PC-3 (cell line): ENCODE measurements at regions of chr15 and their contacts with region 1.

Region 1: GRCh38 chr15:33278816-33279612 is 31.8 kb upstream of the RYR3 start:
- DNase-seq: peak; percentile 96
- ATAC-seq: peak; percentile 94
- H3K4me3 ChIP-seq: peak overlapping the region; percentile 23; the same call in 1 of the 2 replicates
- H3K27ac ChIP-seq: peak overlapping the region; percentile 97
- H3K4me1 ChIP-seq: peaks cover 19% of the 10 kb centered on the region
- H3K27me3 ChIP-seq: no peaks in the 10 kb centered on the region
- CTCF ChIP-seq: 0 out of 2 replicates have a peak, but pooled peaks have one; percentile 26

Region 2: DNA sequence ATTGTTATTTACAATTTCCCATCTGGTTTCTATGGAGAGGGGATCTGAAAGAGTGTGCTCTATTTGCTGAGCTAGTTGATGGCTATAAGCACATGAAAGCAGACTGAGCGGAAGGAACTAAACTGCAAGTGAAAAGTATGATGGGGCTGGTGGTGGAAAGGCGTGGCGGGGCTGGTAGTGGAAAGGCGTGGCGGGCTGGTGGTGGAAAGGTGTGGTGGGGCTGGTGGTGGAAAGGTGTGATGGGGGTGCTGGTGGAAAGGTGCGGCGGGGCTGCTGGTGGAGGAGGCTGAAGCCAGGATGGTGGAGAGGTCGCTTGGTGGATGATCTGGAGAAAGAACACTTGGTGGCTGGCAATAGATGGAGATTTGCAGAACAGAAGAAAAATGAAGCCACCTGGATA is 221.2 kb before region 1 on chr15:
- CTCF ChIA-PET with region 1: no interaction called
- POLR2A ChIA-PET with region 1: interaction called, 11 read pairs
- intact Hi-C with region 1: no loop called
- DNase-seq: no peak
- ATAC-seq: no peak
- H3K4me3 ChIP-seq: no peak overlapping the region
- H3K27ac ChIP-seq: no peak overlapping the region
- H3K4me1 ChIP-seq: no peaks in the 10 kb centered on the region
- H3K27me3 ChIP-seq: no peaks in the 10 kb centered on the region
- CTCF ChIP-seq: no peak

Region 3: DNA sequence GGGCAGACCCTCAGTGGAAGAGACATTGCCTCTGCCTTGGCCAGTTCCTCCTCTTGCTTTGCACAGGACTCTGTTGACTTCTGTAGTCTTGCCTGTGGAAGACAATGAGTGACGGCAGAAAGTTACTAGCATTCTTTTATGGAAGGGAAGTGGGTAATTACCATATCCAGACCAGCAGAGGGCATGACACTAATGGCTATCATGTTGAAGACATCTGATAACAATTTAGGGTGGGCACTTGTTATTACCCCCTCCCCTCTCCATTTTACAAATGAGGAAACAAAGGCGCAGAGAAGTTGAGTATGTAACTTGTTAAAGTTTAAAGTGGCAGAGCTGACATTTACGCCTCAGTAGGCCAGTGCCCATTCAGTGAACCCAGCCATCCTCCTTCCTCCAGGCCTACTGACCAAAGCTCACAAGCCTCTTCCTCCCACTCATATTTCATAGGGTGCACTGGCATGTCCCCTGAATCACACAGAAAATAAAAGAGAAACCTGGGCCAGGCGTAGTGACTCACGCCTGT is 36.3 kb before region 1 on chr15:
- CTCF ChIA-PET with region 1: no interaction called
- POLR2A ChIA-PET with region 1: no interaction called
- intact Hi-C with region 1: loop called (anchors 5 kb)
- DNase-seq: peak; percentile 62
- ATAC-seq: peak; percentile 30
- H3K4me3 ChIP-seq: no peak overlapping the region; the same call in 1 of the 2 replicates
- H3K27ac ChIP-seq: peak overlapping the region; percentile 95
- H3K4me1 ChIP-seq: peaks cover 39% of the 10 kb centered on the region
- H3K27me3 ChIP-seq: 0 out of 2 replicates have a peak, but pooled peaks cover 6% of the 10 kb centered on the region
- CTCF ChIP-seq: peak; percentile 79